ENCODE measurements at regions of chr1 and their contacts with region 1.

Region 1: DNA sequence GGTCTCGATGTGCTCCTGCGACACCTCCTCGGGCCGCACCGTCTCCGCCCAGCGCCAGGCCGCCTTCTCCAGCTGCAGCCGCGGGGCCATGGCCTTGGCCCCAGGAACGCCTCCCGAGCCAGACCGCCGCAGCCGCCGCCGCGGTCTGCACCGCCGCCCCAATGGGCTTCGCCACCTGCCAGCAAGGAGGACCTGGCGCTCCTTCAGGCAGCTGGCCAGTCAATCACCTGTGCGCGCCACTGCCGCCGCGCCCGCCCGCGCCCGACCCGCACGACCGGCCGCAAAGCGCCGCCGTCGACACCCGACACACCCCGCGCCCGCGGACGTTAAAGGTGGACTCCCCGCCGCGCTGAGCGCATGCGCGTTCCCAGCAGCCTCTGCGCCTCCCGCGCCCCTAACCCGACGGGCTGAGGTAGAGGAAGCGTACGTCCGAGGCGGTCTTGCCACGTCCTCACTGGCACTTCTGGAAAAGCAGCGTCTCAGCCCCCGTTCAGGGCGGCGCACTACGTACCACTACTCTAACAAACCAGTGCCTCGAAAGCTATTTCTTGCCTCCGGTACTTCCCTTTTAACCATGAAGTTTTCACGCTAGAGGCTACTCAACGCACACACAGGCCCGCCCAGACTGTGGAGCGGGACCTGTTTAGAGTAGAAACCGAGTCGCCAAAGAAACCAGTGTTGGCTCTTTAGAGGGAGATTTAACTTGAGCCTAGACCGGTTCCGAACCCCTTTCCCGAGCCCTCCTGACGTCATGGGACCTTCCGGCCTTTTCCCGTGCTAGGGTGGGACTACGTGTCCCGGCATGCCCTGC is at the start of gene USP48:
- DNase-seq: peak; percentile 93
- H3K4me3 ChIP-seq: peak within 1 kb of the TSS; percentile 52
- CTCF ChIP-seq: no peak

Region 2: GRCh38 chr1:21852282-21853128 is 69.4 kb after region 1 on chr1:
- in situ Hi-C with region 1: loop called (anchors 5 kb)
- DNase-seq: no peak
- H3K4me3 ChIP-seq: no peak overlapping the region
- CTCF ChIP-seq: no peak

Region 3: DNA sequence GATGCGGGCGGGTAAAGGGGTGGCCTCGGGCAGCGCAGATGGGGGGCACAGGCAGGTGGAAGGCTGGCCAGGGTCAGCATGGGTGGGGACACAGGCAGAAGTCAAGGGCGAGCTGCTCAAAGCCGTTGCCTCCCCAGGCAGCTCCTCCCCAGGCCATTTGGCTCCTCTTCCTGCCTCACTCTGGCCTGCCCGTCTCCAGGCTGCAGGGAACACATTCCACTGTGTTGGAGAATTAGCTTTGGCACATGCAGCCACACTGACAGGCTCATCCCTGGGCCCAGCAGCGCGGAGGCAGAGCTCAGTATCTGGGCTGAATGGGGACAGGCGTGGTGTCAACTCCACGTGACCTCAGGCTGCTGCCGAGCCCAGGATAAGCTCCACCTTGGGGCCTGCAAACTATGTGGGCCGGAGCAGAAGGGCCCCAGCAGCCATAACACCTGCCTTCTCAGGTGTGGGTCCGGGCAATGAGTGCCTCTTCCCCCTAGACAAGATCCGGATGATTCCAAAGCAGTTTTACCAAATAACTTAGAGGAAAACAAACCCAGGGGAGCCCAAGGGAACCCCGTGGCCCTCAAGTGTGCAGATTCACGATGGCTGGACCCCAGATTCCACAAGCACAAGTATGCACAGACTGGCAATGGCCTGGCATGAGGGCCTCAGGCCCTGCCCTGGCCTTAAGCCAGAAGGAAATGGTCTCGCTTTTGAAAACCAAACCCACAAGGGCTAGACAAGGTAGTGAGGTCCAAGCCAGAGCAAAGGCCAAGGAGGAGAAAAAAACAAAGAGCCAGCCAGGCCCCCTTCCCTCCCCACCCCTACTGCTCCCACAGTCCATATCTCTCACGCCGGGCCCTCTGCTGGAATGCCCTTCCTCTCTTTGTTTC is 113.8 kb after region 1 on chr1:
- in situ Hi-C with region 1: no loop called
- DNase-seq: no peak
- H3K4me3 ChIP-seq: no peak overlapping the region
- CTCF ChIP-seq: no peak

Region 4: DNA sequence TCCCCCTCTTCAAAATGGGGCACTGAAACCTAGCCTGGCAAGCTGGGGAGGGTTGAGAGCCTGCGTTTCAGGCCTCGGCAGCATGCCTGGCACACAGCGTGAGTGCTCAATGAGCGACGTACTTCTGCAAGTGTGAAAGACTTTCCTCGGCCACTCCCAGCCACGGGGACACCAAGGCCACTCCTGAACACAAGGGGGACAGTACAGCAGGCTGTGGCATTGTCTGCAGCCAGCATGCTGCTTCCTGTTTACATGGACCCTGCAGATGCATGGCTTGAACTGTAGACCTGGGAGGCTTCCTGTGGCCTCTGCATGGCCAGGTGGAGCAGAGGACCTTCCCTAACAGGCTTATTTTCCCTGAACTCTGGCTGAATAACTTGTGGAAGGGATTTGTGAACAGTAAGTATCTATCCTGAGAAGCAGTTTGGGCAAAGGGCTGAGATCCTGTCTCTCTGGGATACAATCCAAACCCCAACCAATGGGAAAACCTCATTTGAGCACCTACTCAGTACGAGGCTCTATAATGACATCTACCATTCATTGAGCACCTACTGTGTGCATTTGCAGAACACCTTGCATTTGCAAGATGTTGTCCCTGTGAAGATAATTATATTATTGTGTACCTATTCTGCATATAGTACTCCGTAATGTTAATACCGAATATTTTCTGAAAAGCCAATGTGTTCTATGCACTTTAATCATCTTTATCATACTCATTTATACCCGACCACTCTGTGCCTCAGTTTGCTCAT is 163.9 kb after region 1 on chr1:
- in situ Hi-C with region 1: no loop called
- DNase-seq: no peak
- H3K4me3 ChIP-seq: no peak overlapping the region
- CTCF ChIP-seq: no peak

Measured in astrocyte of the cerebellum (primary cell).